WTC11 (cell line): ENCODE measurements at regions of chr10 and their contacts with region 1.

Region 1: GRCh38 chr10:6877722-6878392 is 297.8 kb upstream of the PRKCQ start:
- DNase-seq: peak; percentile 42
- ATAC-seq: peak; percentile 89
- H3K4me3 Mint-ChIP-seq: no peak overlapping the region
- H3K27ac Mint-ChIP-seq: no peak overlapping the region
- H3K4me1 Mint-ChIP-seq: peaks cover 45% of the 10 kb centered on the region
- H3K27me3 Mint-ChIP-seq: no peaks in the 10 kb centered on the region
- CTCF ChIP-seq: no peak

Region 2: GRCh38 chr10:6888434-6888833 is 10.6 kb after region 1 on chr10:
- CTCF ChIA-PET with region 1: interaction called, 10 read pairs
- POLR2A ChIA-PET with region 1: no interaction called
- DNase-seq: no peak
- ATAC-seq: no peak
- H3K4me3 Mint-ChIP-seq: no peak overlapping the region
- H3K27ac Mint-ChIP-seq: no peak overlapping the region
- H3K4me1 Mint-ChIP-seq: peaks cover 41% of the 10 kb centered on the region
- H3K27me3 Mint-ChIP-seq: no peaks in the 10 kb centered on the region
- CTCF ChIP-seq: no peak